PC-3 (cell line): ENCODE measurements at regions of chr5 and their contacts with region 1.

Region 1: DNA sequence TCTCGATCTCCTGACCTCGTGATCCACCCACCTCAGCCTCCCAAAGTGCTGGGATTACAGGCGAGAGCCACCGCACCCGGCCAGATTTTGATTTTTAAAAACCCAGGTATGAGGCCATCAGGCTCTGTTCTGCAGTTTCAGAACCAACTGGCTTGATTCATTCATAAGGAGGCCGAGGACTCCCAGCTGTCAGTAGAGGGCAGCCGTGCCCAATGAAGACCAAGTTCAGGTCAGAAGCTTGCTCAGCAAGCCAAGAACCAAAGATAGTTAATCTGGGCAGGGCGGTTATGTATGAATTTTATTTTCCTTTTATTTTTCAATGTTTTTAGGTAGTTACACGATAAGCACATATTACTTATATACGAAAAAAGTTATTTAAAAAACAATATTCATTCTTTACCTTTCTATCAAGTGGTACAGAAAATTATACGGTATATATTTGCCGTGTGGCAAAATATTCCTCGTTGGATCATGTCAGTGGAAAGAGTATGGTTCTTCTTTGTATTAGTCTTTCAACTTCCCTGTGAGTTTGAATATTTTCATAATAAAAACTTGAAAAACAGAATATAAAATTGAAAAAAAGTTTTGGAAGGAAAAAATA is 18.0 kb downstream of the MGAT1 start:
- DNase-seq: peak; percentile 92
- ATAC-seq: peak; percentile 72
- H3K4me3 ChIP-seq: no peak overlapping the region
- H3K27ac ChIP-seq: no peak overlapping the region
- H3K4me1 ChIP-seq: peaks cover 20% of the 10 kb centered on the region
- H3K27me3 ChIP-seq: no peaks in the 10 kb centered on the region
- CTCF ChIP-seq: peak; percentile 97

Region 2: GRCh38 chr5:180470966-180471582 is 313.5 kb before region 1 on chr5:
- CTCF ChIA-PET with region 1: no interaction called
- POLR2A ChIA-PET with region 1: no interaction called
- intact Hi-C with region 1: no loop called
- DNase-seq: peak; percentile 61
- ATAC-seq: peak; percentile 34; the same call in 1 of the 2 replicates
- H3K4me3 ChIP-seq: no peak overlapping the region
- H3K27ac ChIP-seq: no peak overlapping the region
- H3K4me1 ChIP-seq: peaks cover 6% of the 10 kb centered on the region; the same call in 1 of the 2 replicates
- H3K27me3 ChIP-seq: no peaks in the 10 kb centered on the region
- CTCF ChIP-seq: peak; percentile 85

Region 3: GRCh38 chr5:180648641-180649296 is 135.8 kb before region 1 on chr5:
- CTCF ChIA-PET with region 1: no interaction called
- POLR2A ChIA-PET with region 1: no interaction called
- intact Hi-C with region 1: no loop called
- DNase-seq: no peak
- ATAC-seq: no peak
- H3K4me3 ChIP-seq: no peak overlapping the region
- H3K27ac ChIP-seq: no peak overlapping the region
- H3K4me1 ChIP-seq: no peaks in the 10 kb centered on the region
- H3K27me3 ChIP-seq: peaks cover 79% of the 10 kb centered on the region
- CTCF ChIP-seq: no peak

Region 4: GRCh38 chr5:180802325-180803180 is 18.0 kb after region 1 on chr5 and contains the start of gene MGAT1:
- CTCF ChIA-PET with region 1: interaction called, 4 read pairs
- POLR2A ChIA-PET with region 1: no interaction called
- intact Hi-C with region 1: loop called (anchors 1 kb)
- DNase-seq: peak; percentile 90
- ATAC-seq: peak; percentile 70
- H3K4me3 ChIP-seq: peak within 1 kb of the TSS; percentile 89
- H3K27ac ChIP-seq: peak within 1 kb of the TSS; percentile 70
- H3K4me1 ChIP-seq: peaks cover 51% of the 10 kb centered on the region
- H3K27me3 ChIP-seq: no peaks in the 10 kb centered on the region
- CTCF ChIP-seq: no peak
- total RNA-seq, gene MGAT1: 104 and 132 TPM in 2 replicates

Region 5: GRCh38 chr5:180825768-180826525 is 41.4 kb after region 1 on chr5:
- CTCF ChIA-PET with region 1: interaction called, 3 read pairs
- POLR2A ChIA-PET with region 1: no interaction called
- intact Hi-C with region 1: loop called (anchors 1 kb)
- DNase-seq: peak; percentile 99
- ATAC-seq: peak; percentile 81
- H3K4me3 ChIP-seq: no peak overlapping the region
- H3K27ac ChIP-seq: peak overlapping the region; percentile 13; the same call in 1 of the 2 replicates
- H3K4me1 ChIP-seq: peaks cover 21% of the 10 kb centered on the region
- H3K27me3 ChIP-seq: no peaks in the 10 kb centered on the region
- CTCF ChIP-seq: no peak

Region 6: GRCh38 chr5:180868960-180869359 is 84.4 kb after region 1 on chr5:
- CTCF ChIA-PET with region 1: no interaction called
- POLR2A ChIA-PET with region 1: no interaction called
- intact Hi-C with region 1: loop called (anchors 1 kb)
- DNase-seq: peak; percentile 98
- ATAC-seq: peak; percentile 91
- H3K4me3 ChIP-seq: no peak overlapping the region
- H3K27ac ChIP-seq: no peak overlapping the region
- H3K4me1 ChIP-seq: peaks cover 13% of the 10 kb centered on the region
- H3K27me3 ChIP-seq: no peaks in the 10 kb centered on the region
- CTCF ChIP-seq: peak; percentile 97

Region 7: GRCh38 chr5:181173420-181174342 is 389.1 kb after region 1 on chr5:
- CTCF ChIA-PET with region 1: interaction called, 3 read pairs
- POLR2A ChIA-PET with region 1: no interaction called
- intact Hi-C with region 1: loop called (anchors 5 kb)
- DNase-seq: peak; percentile 80
- ATAC-seq: peak; percentile 61
- H3K4me3 ChIP-seq: peak overlapping the region; percentile 67
- H3K27ac ChIP-seq: peak overlapping the region; percentile 50
- H3K4me1 ChIP-seq: peaks cover 4% of the 10 kb centered on the region; the same call in 1 of the 2 replicates
- H3K27me3 ChIP-seq: no peaks in the 10 kb centered on the region
- CTCF ChIP-seq: 0 out of 2 replicates have a peak, but pooled peaks have one; percentile 31